Activated CD8-positive, alpha-beta T cell treated with anti-CD3 and anti-CD28 coated beads for 36 hours (primary cell): ENCODE measurements at regions of chr5 and their contacts with region 1.

Region 1: GRCh38 chr5:142800776-142801494 is 30.8 kb downstream of the ARHGAP26 start:
- DNase-seq: peak; percentile 74
- ATAC-seq: peak; percentile 78
- H3K4me3 Mint-ChIP-seq: peak overlapping the region; percentile 70
- H3K27ac Mint-ChIP-seq: peak overlapping the region; percentile 93
- H3K4me1 Mint-ChIP-seq: peaks cover 71% of the 10 kb centered on the region
- H3K27me3 Mint-ChIP-seq: no peaks in the 10 kb centered on the region
- CTCF ChIP-seq: no peak

Region 2: DNA sequence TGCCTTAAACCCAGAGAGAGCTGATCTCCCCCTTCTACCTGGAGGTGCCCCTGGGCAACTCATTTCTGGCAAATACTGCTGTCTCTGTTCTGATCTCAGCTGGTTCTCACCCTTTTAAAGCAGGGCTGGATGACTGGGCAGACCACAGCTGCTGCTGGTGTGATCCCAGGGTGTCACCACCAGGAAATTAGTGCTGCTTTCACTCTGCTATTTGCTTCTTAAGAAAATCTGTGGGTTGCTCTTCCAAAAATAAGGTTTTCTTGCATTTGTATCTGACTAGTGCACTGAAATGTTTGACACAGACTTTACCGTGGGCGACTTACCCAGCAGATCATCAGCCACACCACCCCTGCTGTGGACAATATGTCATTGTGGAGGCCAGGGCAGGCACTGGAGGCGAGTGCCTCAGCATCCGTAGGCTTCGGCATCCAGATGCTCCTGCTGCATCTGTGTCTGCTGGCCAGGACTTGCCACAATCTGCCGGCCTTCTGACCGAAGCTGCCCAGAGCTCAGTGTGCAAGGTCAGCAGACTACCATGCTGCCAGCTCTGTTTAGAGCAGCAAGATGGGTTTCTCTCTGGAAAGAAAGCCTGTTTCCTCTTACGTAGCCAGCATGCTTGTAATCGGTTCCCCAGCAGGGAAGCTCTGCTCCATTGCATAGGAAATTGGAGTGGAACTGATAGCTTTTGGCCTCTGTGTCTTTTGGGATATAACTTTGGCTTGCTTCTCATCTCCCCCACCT is 17.2 kb before region 1 on chr5:
- CTCF ChIA-PET with region 1: interaction called, 64 read pairs
- POLR2A ChIA-PET with region 1: interaction called, 64 read pairs
- intact Hi-C with region 1: loop called (anchors 2 kb)
- DNase-seq: peak; percentile 90
- ATAC-seq: peak; percentile 87
- H3K4me3 Mint-ChIP-seq: peak overlapping the region; percentile 58
- H3K27ac Mint-ChIP-seq: peak overlapping the region; percentile 84
- H3K4me1 Mint-ChIP-seq: peaks cover 72% of the 10 kb centered on the region
- H3K27me3 Mint-ChIP-seq: no peaks in the 10 kb centered on the region
- CTCF ChIP-seq: no peak

Region 3: GRCh38 chr5:142821733-142822487 is 21.0 kb after region 1 on chr5:
- CTCF ChIA-PET with region 1: interaction called, 10 read pairs
- POLR2A ChIA-PET with region 1: interaction called, 18 read pairs
- intact Hi-C with region 1: loop called (anchors 1 kb)
- DNase-seq: peak; percentile 37
- ATAC-seq: peak; percentile 93
- H3K4me3 Mint-ChIP-seq: no peak overlapping the region
- H3K27ac Mint-ChIP-seq: peak overlapping the region; percentile 70
- H3K4me1 Mint-ChIP-seq: peaks cover 81% of the 10 kb centered on the region
- H3K27me3 Mint-ChIP-seq: no peaks in the 10 kb centered on the region
- CTCF ChIP-seq: no peak

Region 4: GRCh38 chr5:142830241-142830989 is 29.5 kb after region 1 on chr5:
- CTCF ChIA-PET with region 1: interaction called, 4 read pairs
- POLR2A ChIA-PET with region 1: interaction called, 10 read pairs
- intact Hi-C with region 1: no loop called
- DNase-seq: no peak
- ATAC-seq: no peak
- H3K4me3 Mint-ChIP-seq: no peak overlapping the region
- H3K27ac Mint-ChIP-seq: no peak overlapping the region
- H3K4me1 Mint-ChIP-seq: peaks cover 75% of the 10 kb centered on the region
- H3K27me3 Mint-ChIP-seq: no peaks in the 10 kb centered on the region
- CTCF ChIP-seq: no peak